ENCODE measurements at regions of chr12 and their contacts with region 1.

Region 1: GRCh38 chr12:93677195-93678064 is at the start of gene CRADD:
- DNase-seq: peak; percentile 90
- ATAC-seq: peak; percentile 97
- H3K4me3 Mint-ChIP-seq: peak within 1 kb of the TSS; percentile 97
- H3K27ac Mint-ChIP-seq: peak within 1 kb of the TSS; percentile 100
- H3K4me1 Mint-ChIP-seq: peaks cover 29% of the 10 kb centered on the region
- H3K27me3 Mint-ChIP-seq: peaks cover 8% of the 10 kb centered on the region
- total RNA-seq, gene CRADD: 5.7 to 7.8 TPM

Region 2: DNA sequence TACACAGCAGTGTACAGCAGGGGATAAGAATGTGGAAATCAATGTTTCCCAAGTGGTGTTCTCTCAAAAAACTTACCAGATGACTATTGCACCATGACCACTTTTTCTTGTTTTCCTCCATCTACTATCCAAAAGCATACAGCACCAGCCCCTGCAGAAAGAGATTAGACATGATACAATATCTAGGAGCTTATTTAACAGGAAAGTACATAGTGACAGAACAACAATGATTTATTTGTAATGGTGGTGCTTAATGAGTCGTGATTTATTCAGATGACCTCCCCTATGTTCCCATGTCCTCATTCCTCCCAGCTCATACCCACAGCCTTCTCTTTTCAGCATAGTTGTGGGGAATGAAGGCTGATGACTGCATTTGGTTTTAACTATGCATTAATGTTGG is 1945.3 kb before region 1 on chr12:
- CTCF ChIA-PET with region 1: no interaction called
- POLR2A ChIA-PET with region 1: no interaction called
- intact Hi-C with region 1: no loop called
- DNase-seq: no peak
- ATAC-seq: no peak
- H3K4me3 Mint-ChIP-seq: no peak overlapping the region
- H3K27ac Mint-ChIP-seq: no peak overlapping the region
- H3K4me1 Mint-ChIP-seq: no peaks in the 10 kb centered on the region
- H3K27me3 Mint-ChIP-seq: no peaks in the 10 kb centered on the region

Region 3: DNA sequence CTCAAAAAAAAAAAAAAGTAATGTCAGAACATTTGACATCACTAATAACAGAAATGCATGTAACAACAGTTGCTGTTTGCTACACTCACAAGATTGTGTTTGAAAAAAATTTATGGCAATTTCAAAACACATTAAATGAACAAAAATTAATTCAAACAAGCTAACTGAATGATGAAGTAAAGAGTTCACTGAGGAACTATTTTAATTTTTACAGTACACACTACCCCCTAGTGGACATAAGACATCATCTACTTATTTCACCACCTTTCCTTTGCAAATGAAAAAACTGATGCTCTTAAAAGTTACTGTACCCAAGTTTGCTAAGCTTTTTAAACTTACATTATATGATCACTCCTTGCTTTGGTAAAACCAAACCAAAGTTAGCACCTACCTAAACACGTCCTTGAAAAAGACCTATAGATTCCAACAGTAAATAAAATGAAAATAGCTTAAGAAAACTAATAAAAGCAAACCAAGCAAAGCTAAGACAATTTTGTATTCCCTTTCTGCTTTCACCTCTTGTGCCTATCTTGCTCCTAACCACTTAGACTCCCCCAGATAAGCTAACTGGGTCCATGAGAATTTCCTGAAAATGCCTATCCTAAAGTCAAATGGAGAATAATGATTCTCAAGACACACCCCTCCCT is 257.9 kb before region 1 on chr12:
- CTCF ChIA-PET with region 1: no interaction called
- POLR2A ChIA-PET with region 1: no interaction called
- intact Hi-C with region 1: no loop called
- DNase-seq: no peak
- ATAC-seq: peak; percentile 31
- H3K4me3 Mint-ChIP-seq: no peak overlapping the region
- H3K27ac Mint-ChIP-seq: peak overlapping the region; percentile 44
- H3K4me1 Mint-ChIP-seq: peaks cover 90% of the 10 kb centered on the region
- H3K27me3 Mint-ChIP-seq: no peaks in the 10 kb centered on the region

Region 4: DNA sequence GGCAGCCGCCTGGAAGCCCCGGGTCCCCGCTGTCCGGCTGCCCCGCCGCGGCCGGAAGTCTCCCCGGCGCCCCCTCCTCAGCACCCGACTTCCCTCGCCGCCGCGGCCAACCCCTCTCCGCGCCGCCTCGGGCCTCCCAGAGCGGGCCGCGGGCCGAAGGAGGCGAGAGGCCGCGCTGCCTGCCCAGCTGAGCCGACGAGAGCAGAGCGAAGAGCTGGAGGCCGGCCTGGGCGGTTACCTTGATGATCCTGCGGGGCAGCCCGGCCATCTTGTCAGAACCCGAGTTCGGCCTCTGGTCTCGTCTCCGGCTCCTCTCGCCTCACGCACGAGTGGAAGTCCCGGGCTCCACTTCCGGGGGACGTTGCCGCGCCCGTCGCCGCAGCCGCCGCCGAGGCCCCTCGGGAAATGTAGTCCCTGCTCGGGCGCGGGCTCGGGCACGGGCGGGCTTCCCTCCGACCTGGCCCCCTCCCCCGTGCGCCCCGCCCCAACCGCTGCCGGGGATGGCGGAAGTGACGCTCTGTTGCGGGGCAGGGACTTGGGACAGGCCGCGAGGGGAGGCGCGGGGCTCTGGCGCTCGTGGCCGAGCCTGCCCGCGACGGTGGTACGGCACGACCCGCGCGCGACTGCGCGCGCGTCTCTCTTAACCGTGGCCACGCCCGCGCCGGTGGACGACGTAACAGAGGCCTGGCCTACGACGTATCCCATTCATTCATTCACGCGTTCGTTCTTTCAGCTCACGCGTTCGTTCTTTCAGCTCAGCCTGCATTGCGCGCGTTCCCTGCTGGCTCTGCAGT is 235.6 kb before region 1 on chr12 and contains the start of gene UBE2N:
- CTCF ChIA-PET with region 1: no interaction called
- POLR2A ChIA-PET with region 1: no interaction called
- intact Hi-C with region 1: loop called (anchors 1 kb)
- DNase-seq: peak; percentile 98
- ATAC-seq: peak; percentile 84
- H3K4me3 Mint-ChIP-seq: peak within 1 kb of the TSS; percentile 99
- H3K27ac Mint-ChIP-seq: peak within 1 kb of the TSS; percentile 99
- H3K4me1 Mint-ChIP-seq: peaks cover 48% of the 10 kb centered on the region
- H3K27me3 Mint-ChIP-seq: no peaks in the 10 kb centered on the region
- total RNA-seq, gene UBE2N: 186 to 279 TPM

Region 5: DNA sequence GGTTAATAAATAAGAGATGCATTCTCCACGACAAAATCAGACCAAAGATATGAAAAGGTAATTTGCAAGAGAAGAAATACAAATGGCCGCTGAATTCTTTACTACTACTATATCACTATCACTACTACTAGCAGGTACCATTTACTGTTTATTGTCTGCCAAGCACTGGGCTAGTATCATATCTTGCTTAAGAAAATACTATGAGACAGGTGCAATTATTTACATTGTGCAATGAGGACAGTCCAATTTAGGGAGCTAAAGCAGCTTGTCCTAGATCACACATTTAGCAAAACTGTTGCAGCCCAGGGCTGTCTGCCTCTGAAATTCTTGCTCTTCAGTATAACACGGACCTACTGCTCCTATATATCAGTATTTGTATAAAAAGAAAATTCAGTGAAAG is 52.5 kb after region 1 on chr12:
- CTCF ChIA-PET with region 1: no interaction called
- POLR2A ChIA-PET with region 1: no interaction called
- intact Hi-C with region 1: no loop called
- DNase-seq: no peak
- ATAC-seq: no peak
- H3K4me3 Mint-ChIP-seq: no peak overlapping the region
- H3K27ac Mint-ChIP-seq: no peak overlapping the region
- H3K4me1 Mint-ChIP-seq: no peaks in the 10 kb centered on the region
- H3K27me3 Mint-ChIP-seq: no peaks in the 10 kb centered on the region

Region 6: GRCh38 chr12:93742110-93742934 is 64.9 kb after region 1 on chr12:
- CTCF ChIA-PET with region 1: no interaction called
- POLR2A ChIA-PET with region 1: no interaction called
- intact Hi-C with region 1: loop called (anchors 1 to 2 kb)
- DNase-seq: peak; percentile 74
- ATAC-seq: peak; percentile 88
- H3K4me3 Mint-ChIP-seq: peak overlapping the region; percentile 80
- H3K27ac Mint-ChIP-seq: peak overlapping the region; percentile 90
- H3K4me1 Mint-ChIP-seq: peaks cover 21% of the 10 kb centered on the region
- H3K27me3 Mint-ChIP-seq: peaks cover 2% of the 10 kb centered on the region

Region 7: DNA sequence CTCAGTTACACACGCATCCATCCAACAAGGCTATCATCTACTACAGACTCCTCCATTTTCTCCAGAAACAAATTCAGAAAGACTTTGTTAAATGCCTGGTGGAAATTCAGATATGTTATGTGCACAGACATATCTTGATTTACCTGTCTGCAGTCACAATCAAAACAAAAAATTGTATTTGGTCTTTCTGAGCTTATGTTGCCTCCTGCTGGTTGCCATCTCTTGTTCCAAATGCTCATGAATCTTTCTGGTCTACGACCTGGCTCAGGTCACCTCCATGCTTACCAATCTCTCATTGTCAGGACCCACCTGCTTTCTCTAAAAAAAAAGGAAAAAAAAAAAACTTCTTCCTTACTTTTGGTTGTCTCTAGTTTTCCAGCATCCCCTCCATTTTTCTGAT is 301.8 kb after region 1 on chr12:
- CTCF ChIA-PET with region 1: no interaction called
- POLR2A ChIA-PET with region 1: no interaction called
- intact Hi-C with region 1: loop called in 1 of 2 experiments (anchors 5 kb)
- DNase-seq: peak; percentile 43
- ATAC-seq: no peak
- H3K4me3 Mint-ChIP-seq: no peak overlapping the region
- H3K27ac Mint-ChIP-seq: no peak overlapping the region
- H3K4me1 Mint-ChIP-seq: peaks cover 22% of the 10 kb centered on the region
- H3K27me3 Mint-ChIP-seq: peaks cover 12% of the 10 kb centered on the region

Region 8: GRCh38 chr12:94459728-94460615 is 782.5 kb after region 1 on chr12 and contains the start of gene CEP83:
- CTCF ChIA-PET with region 1: no interaction called
- POLR2A ChIA-PET with region 1: no interaction called
- intact Hi-C with region 1: loop called in 1 of 2 experiments (anchors 2 kb)
- DNase-seq: peak; percentile 98
- ATAC-seq: peak; percentile 99
- H3K4me3 Mint-ChIP-seq: peak within 1 kb of the TSS; percentile 96
- H3K27ac Mint-ChIP-seq: peak within 1 kb of the TSS; percentile 95
- H3K4me1 Mint-ChIP-seq: peaks cover 30% of the 10 kb centered on the region
- H3K27me3 Mint-ChIP-seq: peaks cover 10% of the 10 kb centered on the region
- total RNA-seq, gene CEP83: 21.9 to 22.6 TPM